A673 (cell line): ENCODE measurements at regions of chr11 and their contacts with region 1.

Region 1: DNA sequence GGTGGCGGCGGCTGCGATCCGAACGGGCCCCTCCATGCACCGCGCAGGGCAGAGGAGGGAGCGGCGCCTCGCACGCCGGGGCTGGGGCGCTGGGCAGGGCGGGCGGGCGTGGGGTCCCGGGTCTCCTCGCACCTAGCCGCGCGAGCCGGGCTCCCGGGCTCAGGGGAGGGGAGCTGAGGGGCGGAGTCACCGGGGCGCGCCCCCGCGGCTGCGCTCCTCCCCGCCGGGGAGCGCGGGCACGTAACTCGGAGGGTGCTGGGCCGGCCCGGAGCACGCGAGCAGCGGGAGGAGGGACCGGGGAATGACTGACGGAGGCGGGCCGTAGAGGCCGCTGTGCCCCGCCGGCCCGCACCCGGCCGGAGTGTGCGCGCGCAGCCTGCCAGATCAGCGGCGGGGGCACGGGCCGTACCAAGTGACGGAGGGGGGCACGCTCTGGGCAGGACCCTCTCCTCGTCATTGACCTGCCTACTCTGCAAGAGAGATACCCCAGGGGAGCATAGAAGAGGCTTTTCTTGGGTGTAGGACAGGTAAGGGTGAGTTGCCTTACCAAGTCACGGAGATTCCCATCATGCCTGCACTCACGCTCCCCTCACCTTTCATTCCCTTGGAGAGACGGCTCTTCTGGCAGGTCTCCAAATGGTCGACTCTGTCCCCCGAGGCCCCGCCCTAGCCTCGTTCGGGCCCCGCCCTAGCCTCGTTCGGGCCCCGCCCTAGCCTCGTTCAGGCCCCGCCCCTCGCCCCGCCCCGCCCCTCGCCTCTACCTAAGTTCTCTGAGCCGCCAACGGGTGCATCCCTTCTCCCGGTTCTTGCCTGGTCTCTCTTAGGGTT is at the start of gene CDON:
- DNase-seq: peak; percentile 98
- H3K4me3 ChIP-seq: peak within 1 kb of the TSS; percentile 70
- H3K27ac ChIP-seq: peak within 1 kb of the TSS; percentile 98
- H3K4me1 ChIP-seq: peaks cover 12% of the 10 kb centered on the region
- H3K27me3 ChIP-seq: no peaks in the 10 kb centered on the region
- CTCF ChIP-seq: no peak
- total RNA-seq, gene CDON: 25.3 and 31.0 TPM in 2 replicates

Region 2: DNA sequence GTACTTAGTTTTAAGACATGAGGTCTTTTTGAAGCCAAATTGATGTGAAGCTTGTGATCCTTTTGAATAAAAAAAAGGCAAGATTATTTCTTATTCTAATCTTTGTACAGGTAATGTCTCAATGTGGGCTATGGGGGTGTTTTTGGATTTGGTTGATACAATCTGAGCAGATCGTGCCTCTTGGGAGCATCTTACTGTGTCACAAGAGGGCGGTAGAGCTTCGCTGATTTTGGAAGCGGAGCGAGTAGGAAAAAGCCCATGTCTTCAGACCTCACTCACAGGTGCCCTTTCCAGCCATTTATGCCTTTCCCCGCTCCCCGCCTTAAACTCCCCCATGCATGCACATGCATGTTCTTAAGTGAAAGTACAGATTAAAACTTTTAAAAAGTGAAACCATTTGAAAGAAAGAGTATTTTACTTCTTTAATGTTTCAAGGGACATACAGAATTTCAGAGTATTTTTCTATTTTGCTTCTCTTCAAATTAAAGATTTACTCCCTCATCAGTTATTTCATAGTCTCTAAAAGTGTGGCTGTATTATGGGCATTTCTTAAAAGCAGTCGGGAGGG is 139.8 kb before region 1 on chr11:
- CTCF ChIA-PET with region 1: no interaction called
- POLR2A ChIA-PET with region 1: no interaction called
- intact Hi-C with region 1: loop called (anchors 5 kb)
- DNase-seq: peak; percentile 88
- H3K4me3 ChIP-seq: no peak overlapping the region
- H3K27ac ChIP-seq: no peak overlapping the region
- H3K4me1 ChIP-seq: no peaks in the 10 kb centered on the region
- H3K27me3 ChIP-seq: peaks cover 7% of the 10 kb centered on the region
- CTCF ChIP-seq: peak; percentile 95

Region 3: DNA sequence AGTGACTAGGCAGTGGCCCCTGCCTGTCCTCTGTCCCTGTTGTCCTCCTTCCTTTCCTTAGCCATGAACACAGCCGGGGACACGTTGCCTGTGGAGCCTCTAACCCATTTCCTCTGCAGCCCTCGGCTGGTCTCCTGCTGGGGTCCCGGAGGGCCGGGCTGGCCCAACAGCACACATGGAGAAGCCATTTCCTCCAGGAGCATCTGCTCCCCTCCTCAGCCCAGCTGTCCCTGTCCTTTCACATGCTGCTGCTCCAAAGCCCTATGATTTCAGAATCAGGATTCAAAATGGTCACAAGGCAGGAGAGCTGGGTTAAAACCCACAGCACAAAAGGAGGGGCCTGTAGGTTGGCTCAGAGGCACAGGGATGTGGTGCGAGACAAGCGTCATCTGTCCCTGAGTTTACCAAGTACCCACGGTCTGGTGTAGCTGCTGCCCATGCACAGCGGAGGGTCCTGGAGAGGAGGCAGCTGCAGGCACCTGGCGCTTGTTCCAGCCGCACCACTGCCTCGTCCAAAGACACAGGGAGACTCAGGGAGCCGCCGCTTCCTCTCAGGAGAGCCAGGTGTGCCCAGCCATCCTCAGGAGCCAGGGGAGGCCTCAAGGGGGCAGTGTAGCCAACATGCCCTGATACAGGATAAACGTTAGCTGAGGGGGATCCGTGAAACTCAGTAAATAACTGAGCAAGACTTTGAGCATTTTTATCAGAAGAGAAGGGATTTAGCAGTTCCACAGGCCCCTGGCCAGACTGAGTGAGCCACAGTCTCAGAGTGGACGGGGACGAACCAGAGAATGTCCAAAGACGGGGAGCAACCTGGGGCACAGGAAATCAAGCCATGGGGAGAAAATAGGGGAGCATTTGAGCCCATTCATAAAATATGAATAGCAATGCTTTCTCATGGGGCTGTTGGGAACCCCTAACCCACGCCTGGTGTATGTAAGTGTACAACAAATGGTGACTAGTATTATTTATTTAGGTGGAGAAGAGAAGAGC is 121.0 kb before region 1 on chr11:
- CTCF ChIA-PET with region 1: interaction called, 12 read pairs
- POLR2A ChIA-PET with region 1: no interaction called
- intact Hi-C with region 1: loop called (anchors 1 kb)
- DNase-seq: peak; percentile 66
- H3K4me3 ChIP-seq: no peak overlapping the region
- H3K27ac ChIP-seq: no peak overlapping the region
- H3K4me1 ChIP-seq: no peaks in the 10 kb centered on the region
- H3K27me3 ChIP-seq: no peaks in the 10 kb centered on the region
- CTCF ChIP-seq: peak; percentile 89

Region 4: GRCh38 chr11:126034039-126034932 is 28.6 kb before region 1 on chr11:
- CTCF ChIA-PET with region 1: no interaction called
- POLR2A ChIA-PET with region 1: no interaction called
- intact Hi-C with region 1: no loop called
- DNase-seq: peak; percentile 46
- H3K4me3 ChIP-seq: peak overlapping the region; percentile 20
- H3K27ac ChIP-seq: peak overlapping the region; percentile 16
- H3K4me1 ChIP-seq: peaks cover 22% of the 10 kb centered on the region
- H3K27me3 ChIP-seq: no peaks in the 10 kb centered on the region
- CTCF ChIP-seq: no peak

Region 5: DNA sequence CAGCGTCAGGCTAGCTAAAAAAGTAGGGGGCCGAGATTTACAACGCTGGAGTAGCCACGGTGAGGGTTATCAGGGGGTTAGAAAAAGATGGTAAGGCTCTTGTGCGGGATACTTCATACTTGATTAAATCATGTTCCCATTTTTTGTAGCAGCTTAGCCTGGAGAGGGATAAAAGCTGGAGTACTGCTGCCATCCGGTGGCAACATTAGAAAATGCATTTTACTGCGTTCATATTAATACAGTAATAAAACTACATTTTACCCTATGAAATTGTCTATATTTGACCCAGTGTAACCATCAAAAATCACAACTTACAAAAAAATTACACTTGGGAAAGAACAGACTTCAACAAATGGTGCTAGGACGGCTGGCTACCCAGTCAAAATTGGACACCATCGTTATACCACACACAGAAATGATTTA is 131.2 kb after region 1 on chr11:
- CTCF ChIA-PET with region 1: no interaction called
- POLR2A ChIA-PET with region 1: no interaction called
- intact Hi-C with region 1: loop called (anchors 1 kb)
- DNase-seq: peak; percentile 76
- H3K4me3 ChIP-seq: no peak overlapping the region
- H3K27ac ChIP-seq: no peak overlapping the region
- H3K4me1 ChIP-seq: no peaks in the 10 kb centered on the region
- H3K27me3 ChIP-seq: no peaks in the 10 kb centered on the region
- CTCF ChIP-seq: peak; percentile 90